Naive thymus-derived CD4-positive, alpha-beta T cell (primary cell): ENCODE measurements at regions of chr9 and their contacts with region 1.

Region 1: GRCh38 chr9:4020038-4020754 is 279.7 kb downstream of the GLIS3 start:
- DNase-seq: no peak
- ATAC-seq: no peak
- H3K4me3 ChIP-seq: no peak overlapping the region
- H3K4me3 Mint-ChIP-seq: no peak overlapping the region
- H3K27ac ChIP-seq: no peak overlapping the region
- H3K27ac Mint-ChIP-seq: no peak overlapping the region
- H3K4me1 ChIP-seq: no peaks in the 10 kb centered on the region
- H3K4me1 Mint-ChIP-seq: peaks cover 0 to 4% (median 0%) of the 10 kb centered on the region in 7 donors
- H3K27me3 ChIP-seq: no peaks in the 10 kb centered on the region
- H3K27me3 Mint-ChIP-seq: peaks cover 0 to 6% (median 0%) of the 10 kb centered on the region in 5 donors

Region 2: GRCh38 chr9:3099646-3100045 is 920.5 kb before region 1 on chr9:
- CTCF ChIA-PET with region 1: no interaction called
- POLR2A ChIA-PET with region 1: no interaction called
- intact Hi-C with region 1: loop called in 1 of 2 experiments (anchors 5 kb)
- DNase-seq: no peak
- ATAC-seq: no peak
- H3K4me3 ChIP-seq: no peak overlapping the region
- H3K4me3 Mint-ChIP-seq: no peak overlapping the region
- H3K27ac ChIP-seq: no peak overlapping the region
- H3K27ac Mint-ChIP-seq: no peak overlapping the region
- H3K4me1 ChIP-seq: no peaks in the 10 kb centered on the region
- H3K4me1 Mint-ChIP-seq: no peaks in the 10 kb centered on the region
- H3K27me3 ChIP-seq: no peaks in the 10 kb centered on the region
- H3K27me3 Mint-ChIP-seq: peaks cover 0 to 21% (median 14%) of the 10 kb centered on the region in 5 donors

Region 3: GRCh38 chr9:3719286-3719685 is 300.9 kb before region 1 on chr9:
- CTCF ChIA-PET with region 1: no interaction called
- POLR2A ChIA-PET with region 1: no interaction called
- intact Hi-C with region 1: loop called in 1 of 2 experiments (anchors 5 kb)
- DNase-seq: no peak
- ATAC-seq: no peak
- H3K4me3 ChIP-seq: no peak overlapping the region
- H3K4me3 Mint-ChIP-seq: no peak overlapping the region
- H3K27ac ChIP-seq: no peak overlapping the region
- H3K27ac Mint-ChIP-seq: no peak overlapping the region
- H3K4me1 ChIP-seq: no peaks in the 10 kb centered on the region
- H3K4me1 Mint-ChIP-seq: no peaks in the 10 kb centered on the region
- H3K27me3 ChIP-seq: no peaks in the 10 kb centered on the region
- H3K27me3 Mint-ChIP-seq: peaks cover 0 to 18% (median 8%) of the 10 kb centered on the region in 5 donors

Region 4: DNA sequence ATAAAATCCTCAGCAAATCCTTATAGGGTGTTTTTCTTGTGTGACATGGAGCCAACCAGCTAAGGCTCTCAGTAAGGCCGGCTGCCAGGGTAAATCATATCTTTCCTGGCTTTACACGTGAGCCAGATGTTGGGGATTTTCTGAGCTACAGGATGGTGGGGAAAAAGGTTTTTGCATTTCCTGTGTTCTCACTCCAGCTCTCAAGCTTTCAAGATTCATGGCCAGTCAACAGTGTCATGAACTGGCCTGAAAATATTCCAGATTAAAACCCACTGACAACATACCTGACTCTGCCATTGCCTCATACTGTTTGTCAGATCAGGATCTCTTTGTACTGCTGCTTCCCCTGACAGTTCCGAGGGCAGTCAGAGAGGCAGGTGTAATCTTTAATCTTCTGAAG is 27.3 kb before region 1 on chr9:
- CTCF ChIA-PET with region 1: no interaction called
- POLR2A ChIA-PET with region 1: no interaction called
- intact Hi-C with region 1: no loop called
- DNase-seq: no peak
- ATAC-seq: no peak
- H3K4me3 ChIP-seq: no peak overlapping the region
- H3K4me3 Mint-ChIP-seq: no peak overlapping the region
- H3K27ac ChIP-seq: no peak overlapping the region
- H3K27ac Mint-ChIP-seq: no peak overlapping the region
- H3K4me1 ChIP-seq: no peaks in the 10 kb centered on the region
- H3K4me1 Mint-ChIP-seq: no peaks in the 10 kb centered on the region
- H3K27me3 ChIP-seq: no peaks in the 10 kb centered on the region
- H3K27me3 Mint-ChIP-seq: peaks cover 0 to 23% (median 4%) of the 10 kb centered on the region in 5 donors